ENCODE measurements at regions of chr15 and their contacts with region 1.

Region 1: GRCh38 chr15:37106490-37107001 is 6.2 kb upstream of the MEIS2 start:
- DNase-seq: no peak
- ATAC-seq: peak; percentile 42; the same call in 2 of the 3 replicates
- H3K4me3 ChIP-seq: no peak overlapping the region
- H3K27ac ChIP-seq: no peak overlapping the region
- H3K4me1 ChIP-seq: no peaks in the 10 kb centered on the region; the same call in 1 of the 2 replicates
- H3K27me3 ChIP-seq: peaks cover 3 to 33% of the 10 kb centered on the region in 2 experiments
- CTCF ChIP-seq: peak; percentile 54 to 78 (median 55)
- EP300 ChIP-seq: no peak
- POLR2A ChIP-seq: no peak
- RAD21 ChIP-seq: peak; percentile 74

Region 2: DNA sequence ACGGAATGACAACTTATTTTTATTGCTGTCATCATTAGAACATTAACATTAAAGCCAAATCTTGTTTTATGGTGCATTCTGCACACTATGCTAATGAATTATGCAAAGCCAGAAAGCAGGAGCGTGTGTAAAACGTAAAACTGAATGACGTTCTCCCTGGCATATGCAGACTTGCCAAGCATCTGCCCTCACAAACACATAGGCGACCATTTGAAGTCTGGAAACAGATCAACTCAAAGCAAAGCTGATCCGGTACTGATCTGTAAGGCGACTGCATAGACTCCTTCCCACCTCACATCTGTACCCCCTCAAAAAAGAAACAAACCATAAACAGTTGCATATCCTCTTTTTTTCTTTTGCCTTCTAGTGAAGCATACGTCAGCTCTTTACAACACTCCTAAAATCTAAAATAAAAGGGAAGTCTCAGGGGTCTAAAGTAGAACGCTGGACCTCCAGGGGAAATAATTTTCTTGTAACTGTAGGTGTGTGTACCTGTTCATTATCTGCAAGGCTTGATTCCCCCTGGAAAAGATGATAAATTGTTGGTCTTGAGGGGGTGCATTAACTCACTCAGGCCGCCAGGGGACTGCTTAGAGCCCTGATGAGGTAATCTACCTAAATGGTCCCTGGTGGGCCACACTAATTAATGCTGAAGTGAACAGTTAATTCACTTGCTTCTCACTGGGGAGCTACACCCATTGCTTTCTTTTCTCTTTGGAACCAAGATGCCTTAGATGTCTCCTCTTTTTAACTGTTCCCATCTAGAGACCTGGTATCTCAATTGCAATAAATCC is 295.7 kb before region 1 on chr15:
- CTCF ChIA-PET with region 1: interaction called, 3 read pairs
- POLR2A ChIA-PET with region 1: no interaction called
- RAD21 ChIA-PET with region 1: no interaction called
- SMC1A ChIA-PET with region 1: no interaction called
- in situ Hi-C with region 1: no loop called
- intact Hi-C with region 1: loop called (anchors 2 kb)
- DNase-seq: no peak
- ATAC-seq: peak; percentile 84
- H3K4me3 ChIP-seq: no peak overlapping the region
- H3K27ac ChIP-seq: no peak overlapping the region
- H3K4me1 ChIP-seq: no peaks in the 10 kb centered on the region
- H3K27me3 ChIP-seq: no peaks in the 10 kb centered on the region
- CTCF ChIP-seq: peak; percentile 44 to 73 (median 62)
- EP300 ChIP-seq: no peak
- POLR2A ChIP-seq: no peak
- RAD21 ChIP-seq: peak; percentile 41

Region 3: DNA sequence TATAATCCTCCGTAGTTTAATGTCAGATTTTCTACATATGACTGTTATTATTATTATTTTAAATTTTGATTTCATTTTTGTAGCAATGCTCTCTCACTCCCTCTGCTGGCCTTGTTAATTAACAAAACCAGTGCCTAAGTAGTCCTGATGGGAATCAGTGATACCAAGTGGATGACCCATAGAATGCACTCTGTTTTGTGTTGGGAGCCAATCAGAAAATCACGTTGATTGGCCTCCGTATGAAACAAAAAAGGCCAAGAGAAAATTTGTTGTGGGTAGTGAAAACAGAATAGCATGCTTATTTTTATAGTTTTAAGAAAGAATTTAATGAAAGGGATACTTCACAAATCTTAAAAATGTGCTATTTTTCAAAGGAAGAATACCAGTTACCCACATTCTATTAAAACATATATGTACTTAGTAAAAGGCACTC is 28.2 kb after region 1 on chr15:
- CTCF ChIA-PET with region 1: interaction called, 10 read pairs
- POLR2A ChIA-PET with region 1: no interaction called
- RAD21 ChIA-PET with region 1: no interaction called
- SMC1A ChIA-PET with region 1: no interaction called
- in situ Hi-C with region 1: no loop called
- intact Hi-C with region 1: no loop called
- DNase-seq: no peak
- ATAC-seq: peak; percentile 80
- H3K4me3 ChIP-seq: no peak overlapping the region
- H3K27ac ChIP-seq: no peak overlapping the region
- H3K4me1 ChIP-seq: peaks cover 4% of the 10 kb centered on the region; the same call in 1 of the 2 replicates
- H3K27me3 ChIP-seq: peaks cover 0 to 2% of the 10 kb centered on the region in 2 experiments; a peak in 2 of 4 replicates
- CTCF ChIP-seq: peak; percentile 53 to 60 (median 55); a peak in 5 of 6 replicates
- EP300 ChIP-seq: no peak
- POLR2A ChIP-seq: no peak
- RAD21 ChIP-seq: peak; percentile 34

Region 4: DNA sequence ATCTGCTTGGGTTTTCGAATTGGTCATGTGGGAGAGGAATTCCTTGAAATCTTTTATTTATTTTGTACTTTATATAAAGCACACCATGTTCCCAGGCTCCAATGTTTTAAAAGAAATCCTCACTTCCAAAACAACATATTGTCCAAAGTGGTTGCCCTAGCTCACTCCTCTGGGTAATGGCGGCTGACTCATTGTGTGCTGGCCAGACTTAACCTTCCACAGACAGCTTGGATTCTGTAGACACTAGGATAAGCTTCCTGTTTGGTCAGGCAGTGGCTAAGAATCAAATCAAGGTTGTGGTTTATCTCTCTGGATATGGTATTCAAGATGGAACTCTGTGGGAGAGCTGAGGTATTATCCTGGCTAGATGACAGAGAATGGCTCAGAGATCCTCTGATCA is 1291.6 kb after region 1 on chr15:
- CTCF ChIA-PET with region 1: no interaction called
- POLR2A ChIA-PET with region 1: no interaction called
- RAD21 ChIA-PET with region 1: no interaction called
- SMC1A ChIA-PET with region 1: no interaction called
- in situ Hi-C with region 1: no loop called
- intact Hi-C with region 1: no loop called
- DNase-seq: no peak
- ATAC-seq: no peak
- H3K4me3 ChIP-seq: no peak overlapping the region
- H3K27ac ChIP-seq: no peak overlapping the region
- H3K4me1 ChIP-seq: no peaks in the 10 kb centered on the region
- H3K27me3 ChIP-seq: 0 out of 4 replicates have a peak, but pooled peaks cover 0 to 2% of the 10 kb centered on the region in 2 experiments
- CTCF ChIP-seq: no peak
- EP300 ChIP-seq: no peak
- POLR2A ChIP-seq: no peak
- RAD21 ChIP-seq: no peak